Activated CD8-positive, alpha-beta T cell treated with anti-CD3 and anti-CD28 coated beads for 36 hours (primary cell): ENCODE measurements at regions of chr1 and their contacts with region 1.

Region 1: GRCh38 chr1:180178511-180179161 is 24.0 kb downstream of the QSOX1 start:
- DNase-seq: peak; percentile 75
- ATAC-seq: peak; percentile 91
- H3K4me3 Mint-ChIP-seq: no peak overlapping the region
- H3K27ac Mint-ChIP-seq: no peak overlapping the region
- H3K4me1 Mint-ChIP-seq: no peaks in the 10 kb centered on the region
- H3K27me3 Mint-ChIP-seq: no peaks in the 10 kb centered on the region
- CTCF ChIP-seq: peak; percentile 94

Region 2: DNA sequence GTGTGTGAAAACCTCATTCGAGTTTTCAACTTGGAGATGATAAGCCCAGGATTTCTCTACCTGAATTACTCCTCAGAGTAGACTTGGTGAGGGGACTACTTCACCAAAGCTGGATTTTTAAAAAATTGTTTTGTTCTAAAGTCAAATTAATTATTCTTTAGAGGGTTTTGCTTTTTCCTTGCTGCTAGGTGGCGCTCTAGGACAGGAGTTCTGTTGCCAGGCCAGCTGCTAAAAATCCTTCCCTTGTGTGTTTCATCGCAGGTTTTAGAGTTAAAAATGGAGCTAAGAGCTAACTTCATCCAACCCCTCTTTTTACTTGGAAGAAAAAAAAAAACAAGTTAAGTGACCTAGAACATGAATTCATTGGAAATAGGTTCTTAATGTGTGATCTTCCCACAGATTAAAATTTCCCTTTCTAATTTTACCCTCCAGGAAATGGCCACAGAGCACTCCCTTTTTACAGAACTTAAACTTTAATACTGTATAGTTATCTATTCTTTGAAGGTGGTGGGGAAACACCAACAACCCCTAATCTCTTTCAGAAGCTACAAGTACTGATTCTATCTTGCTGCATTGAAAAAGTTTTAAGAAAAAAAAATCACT is 472.2 kb before region 1 on chr1:
- CTCF ChIA-PET with region 1: interaction called, 11 read pairs
- POLR2A ChIA-PET with region 1: no interaction called
- intact Hi-C with region 1: loop called (anchors 5 kb)
- DNase-seq: peak; percentile 68
- ATAC-seq: no peak
- H3K4me3 Mint-ChIP-seq: no peak overlapping the region
- H3K27ac Mint-ChIP-seq: no peak overlapping the region
- H3K4me1 Mint-ChIP-seq: peaks cover 6% of the 10 kb centered on the region
- H3K27me3 Mint-ChIP-seq: no peaks in the 10 kb centered on the region
- CTCF ChIP-seq: peak; percentile 80

Region 3: DNA sequence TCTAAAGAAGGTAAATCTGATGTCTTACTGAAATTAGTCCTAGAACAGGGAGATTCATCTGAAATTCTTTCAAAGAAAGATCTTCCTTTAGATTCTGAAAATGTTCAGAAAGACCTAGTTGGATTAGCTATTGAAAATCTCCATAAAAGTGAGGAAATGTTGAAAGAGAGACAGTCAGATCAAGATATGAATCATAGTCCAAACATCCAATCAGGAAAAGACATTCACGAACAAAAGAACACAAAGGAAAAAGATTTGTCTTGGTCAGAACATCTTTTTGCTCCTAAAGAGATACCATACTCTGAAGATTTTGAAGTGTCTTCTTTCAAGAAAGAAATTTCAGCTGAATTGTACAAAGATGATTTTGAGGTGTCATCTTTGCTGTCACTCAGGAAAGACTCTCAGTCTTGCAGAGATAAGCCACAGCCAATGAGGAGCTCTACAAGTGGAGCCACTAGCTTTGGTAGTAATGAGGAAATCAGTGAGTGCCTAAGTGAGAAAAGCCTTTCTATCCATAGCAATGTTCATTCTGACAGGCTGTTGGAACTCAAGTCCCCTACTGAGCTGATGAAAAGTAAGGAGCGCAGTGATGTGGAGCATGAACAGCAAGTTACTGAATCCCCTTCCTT is 85.6 kb before region 1 on chr1:
- CTCF ChIA-PET with region 1: interaction called, 14 read pairs
- POLR2A ChIA-PET with region 1: no interaction called
- intact Hi-C with region 1: no loop called
- DNase-seq: no peak
- ATAC-seq: no peak
- H3K4me3 Mint-ChIP-seq: no peak overlapping the region
- H3K27ac Mint-ChIP-seq: peak overlapping the region; percentile 20
- H3K4me1 Mint-ChIP-seq: no peaks in the 10 kb centered on the region
- H3K27me3 Mint-ChIP-seq: no peaks in the 10 kb centered on the region
- CTCF ChIP-seq: no peak

Region 4: GRCh38 chr1:180154325-180155181 is 24.1 kb before region 1 on chr1 and contains the start of gene QSOX1:
- CTCF ChIA-PET with region 1: interaction called, 11 read pairs
- POLR2A ChIA-PET with region 1: interaction called, 3 read pairs
- intact Hi-C with region 1: no loop called
- DNase-seq: peak; percentile 90
- ATAC-seq: peak; percentile 97
- H3K4me3 Mint-ChIP-seq: peak within 1 kb of the TSS; percentile 90
- H3K27ac Mint-ChIP-seq: peak within 1 kb of the TSS; percentile 85
- H3K4me1 Mint-ChIP-seq: peaks cover 29% of the 10 kb centered on the region
- H3K27me3 Mint-ChIP-seq: no peaks in the 10 kb centered on the region
- CTCF ChIP-seq: no peak
- total RNA-seq, gene QSOX1: 32.2 to 33.9 TPM

Region 5: DNA sequence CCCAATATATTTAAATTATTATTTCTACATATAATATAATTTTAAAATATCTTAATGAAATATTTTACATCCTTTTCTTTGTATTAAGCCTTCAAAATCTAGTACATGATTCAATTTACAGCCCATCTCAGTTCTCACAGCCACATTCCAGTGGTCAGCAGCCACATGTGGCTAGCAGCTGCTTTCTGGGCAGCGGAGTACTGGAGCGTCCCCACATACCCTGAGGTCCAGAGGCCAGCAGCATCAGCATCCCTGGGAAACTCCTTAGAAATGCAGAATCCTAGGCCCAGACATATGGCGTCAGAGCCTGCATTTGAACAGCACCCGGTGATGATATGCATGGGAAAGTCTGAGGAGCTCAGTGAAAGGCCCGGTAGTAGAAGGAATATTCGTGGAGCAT is 42.8 kb after region 1 on chr1:
- CTCF ChIA-PET with region 1: interaction called, 15 read pairs
- POLR2A ChIA-PET with region 1: no interaction called
- intact Hi-C with region 1: no loop called
- DNase-seq: no peak
- ATAC-seq: no peak
- H3K4me3 Mint-ChIP-seq: no peak overlapping the region
- H3K27ac Mint-ChIP-seq: no peak overlapping the region
- H3K4me1 Mint-ChIP-seq: no peaks in the 10 kb centered on the region
- H3K27me3 Mint-ChIP-seq: peaks cover 15% of the 10 kb centered on the region
- CTCF ChIP-seq: no peak